Right ventricle myocardium superior (tissue), 1 donor: ENCODE measurements at regions of chr2 and their contacts with region 1.

Region 1: GRCh38 chr2:170973492-170974303 is 44.6 kb downstream of the GORASP2 start:
- DNase-seq: peak; percentile 92
- ATAC-seq: peak; percentile 99

Region 2: DNA sequence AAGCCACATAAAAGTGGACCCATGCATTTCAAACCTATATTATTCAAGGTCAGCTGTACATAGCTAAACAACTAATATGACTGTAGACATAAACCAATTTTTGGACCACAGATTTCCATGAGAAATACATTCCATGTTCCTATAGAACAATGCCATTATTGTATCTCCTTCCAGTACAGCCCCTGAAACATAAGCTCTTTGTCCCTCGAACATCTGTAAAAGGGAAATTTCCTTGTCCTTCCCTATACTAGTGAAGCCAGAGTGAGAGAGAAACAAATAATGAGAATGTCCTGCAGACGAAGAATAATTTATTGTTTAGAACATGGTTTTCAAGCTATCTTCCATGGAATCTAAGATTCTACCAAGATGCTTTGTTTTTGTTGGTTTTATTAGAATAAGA is 30.7 kb after region 1 on chr2:
- intact Hi-C with region 1: no loop called
- DNase-seq: no peak
- ATAC-seq: no peak

Region 3: DNA sequence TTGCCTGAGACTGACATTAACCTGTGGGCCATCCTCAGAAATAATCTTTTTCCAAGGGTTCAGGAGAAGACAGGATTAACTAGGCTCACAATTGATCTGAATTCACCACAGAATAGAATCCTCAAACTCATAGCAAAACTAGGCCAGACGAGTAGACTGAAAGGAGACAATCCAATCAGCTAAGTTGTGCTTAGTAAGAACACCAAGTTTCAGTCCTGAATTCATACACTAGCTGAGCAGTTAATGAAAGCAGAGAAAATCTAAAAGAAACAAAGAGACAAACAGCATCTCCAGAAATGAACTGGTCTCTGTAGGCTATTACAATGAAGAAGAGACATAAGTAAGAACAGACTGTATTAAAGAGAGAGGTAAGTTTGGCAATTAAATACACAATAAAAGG is 44.8 kb after region 1 on chr2:
- intact Hi-C with region 1: no loop called
- DNase-seq: no peak
- ATAC-seq: no peak

Region 4: DNA sequence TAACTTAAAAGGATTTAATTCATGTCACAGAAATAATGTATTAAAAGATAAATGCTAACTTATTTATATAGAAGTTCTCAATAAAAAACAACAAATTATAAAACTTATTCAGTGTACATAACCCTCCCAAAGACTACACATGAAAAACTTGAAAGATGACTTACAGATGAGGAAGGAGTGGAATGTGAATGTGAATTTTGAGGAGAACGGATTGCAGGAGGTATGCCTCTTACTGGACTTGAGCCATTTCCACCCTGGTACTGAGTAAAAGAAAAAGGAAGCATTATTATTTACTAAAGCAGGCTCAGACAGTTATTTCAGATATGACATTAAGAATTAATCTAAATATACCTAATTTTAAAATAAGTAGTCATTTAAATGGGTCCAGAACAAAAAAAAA is 82.6 kb after region 1 on chr2:
- intact Hi-C with region 1: no loop called
- DNase-seq: no peak
- ATAC-seq: no peak

Region 5: DNA sequence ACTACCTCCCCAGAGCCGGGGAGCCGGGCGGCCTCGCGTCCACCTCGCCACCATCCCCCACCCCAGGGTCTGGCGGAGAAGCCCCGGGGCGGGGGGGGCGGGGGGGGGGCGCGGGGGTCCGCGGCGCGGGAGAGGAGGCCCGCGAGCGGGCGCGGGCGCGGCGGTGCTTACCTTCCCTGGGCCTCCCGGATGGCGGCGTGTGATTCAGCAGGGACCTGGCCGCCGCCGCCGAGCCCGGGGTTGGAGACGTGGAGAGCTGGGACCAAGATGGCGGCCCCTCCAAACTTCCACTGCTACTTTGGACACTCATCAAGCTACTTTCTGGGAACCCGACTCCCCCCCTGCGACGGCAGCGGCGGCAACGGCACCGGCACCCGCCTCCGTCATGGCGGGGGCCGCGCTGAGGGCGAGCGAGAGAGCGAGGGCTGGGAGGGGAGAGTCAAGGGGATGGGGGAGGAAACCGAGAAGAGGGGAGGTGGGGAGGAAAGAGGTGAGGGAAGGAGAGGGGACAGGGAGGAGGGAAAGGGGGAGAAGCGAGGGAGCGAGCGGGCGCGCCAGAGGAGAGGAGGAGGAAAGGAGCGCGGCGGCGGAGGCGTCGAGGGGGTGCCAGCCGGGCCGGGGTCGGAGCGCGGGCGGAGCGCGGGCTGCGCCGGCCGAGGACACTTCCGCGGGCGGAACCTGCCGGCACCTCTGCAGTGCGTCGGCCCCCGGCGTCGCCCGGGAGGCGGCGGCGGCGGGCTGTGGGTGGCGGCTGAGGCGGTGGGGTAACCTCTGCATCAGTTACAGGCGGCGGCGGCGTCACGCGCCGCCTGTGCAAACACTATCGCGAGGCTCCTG is 186.6 kb after region 1 on chr2 and contains the start of gene TLK1:
- intact Hi-C with region 1: loop called (anchors 5 kb)
- DNase-seq: peak; percentile 82
- ATAC-seq: peak; percentile 79
- total RNA-seq, gene TLK1: 27.5 TPM

Region 6: GRCh38 chr2:171253900-171254655 is 280.4 kb after region 1 on chr2:
- intact Hi-C with region 1: no loop called
- DNase-seq: no peak
- ATAC-seq: no peak

Region 7: GRCh38 chr2:171416009-171416926 is 442.6 kb after region 1 on chr2:
- intact Hi-C with region 1: loop called (anchors 5 kb)
- DNase-seq: peak; percentile 84
- ATAC-seq: peak; percentile 99